Psoas muscle (tissue), 8 donors: ENCODE measurements at regions of chr1 and their contacts with region 1.

Region 1: GRCh38 chr1:192808518-192809306 is at the start of gene RGS2:
- DNase-seq: peak; percentile 90 to 93
- ATAC-seq: peak; percentile 98 to 99 (median 98)
- H3K4me3 ChIP-seq: peak within 1 kb of the TSS; percentile 78
- H3K27ac ChIP-seq: peak within 1 kb of the TSS; percentile 66
- H3K4me1 ChIP-seq: peaks cover 14% of the 10 kb centered on the region
- H3K27me3 ChIP-seq: no peaks in the 10 kb centered on the region
- CTCF ChIP-seq: no peak
- total RNA-seq, gene RGS2: 3.5 to 4.7 (median 3.8) TPM

Region 2: DNA sequence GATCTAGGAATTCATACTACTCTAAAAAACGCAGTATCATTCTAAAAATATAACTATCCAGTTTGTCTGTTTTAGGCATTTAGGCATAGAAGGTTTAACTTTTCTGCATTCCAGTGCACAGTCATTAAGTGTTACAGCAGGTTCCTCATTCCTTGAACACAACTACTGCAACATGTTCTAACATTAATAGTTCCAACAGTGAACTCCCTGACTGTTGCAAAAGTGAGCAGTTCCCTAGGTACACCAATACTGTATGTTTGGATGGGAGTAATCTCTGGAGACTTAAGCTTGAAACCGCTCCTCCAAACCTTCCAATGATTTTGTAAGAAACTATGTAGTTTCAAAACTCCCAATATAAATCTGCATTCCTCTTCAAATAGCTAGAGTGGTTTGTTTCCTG is 204.3 kb after region 1 on chr1:
- intact Hi-C with region 1: loop called (anchors 5 to 10 kb)
- DNase-seq: no peak
- ATAC-seq: peak in 2 of 4 donors; percentile 35 to 56
- H3K4me3 ChIP-seq: no peak overlapping the region
- H3K27ac ChIP-seq: no peak overlapping the region
- H3K4me1 ChIP-seq: peaks cover 6% of the 10 kb centered on the region
- H3K27me3 ChIP-seq: no peaks in the 10 kb centered on the region
- CTCF ChIP-seq: no peak

Region 3: DNA sequence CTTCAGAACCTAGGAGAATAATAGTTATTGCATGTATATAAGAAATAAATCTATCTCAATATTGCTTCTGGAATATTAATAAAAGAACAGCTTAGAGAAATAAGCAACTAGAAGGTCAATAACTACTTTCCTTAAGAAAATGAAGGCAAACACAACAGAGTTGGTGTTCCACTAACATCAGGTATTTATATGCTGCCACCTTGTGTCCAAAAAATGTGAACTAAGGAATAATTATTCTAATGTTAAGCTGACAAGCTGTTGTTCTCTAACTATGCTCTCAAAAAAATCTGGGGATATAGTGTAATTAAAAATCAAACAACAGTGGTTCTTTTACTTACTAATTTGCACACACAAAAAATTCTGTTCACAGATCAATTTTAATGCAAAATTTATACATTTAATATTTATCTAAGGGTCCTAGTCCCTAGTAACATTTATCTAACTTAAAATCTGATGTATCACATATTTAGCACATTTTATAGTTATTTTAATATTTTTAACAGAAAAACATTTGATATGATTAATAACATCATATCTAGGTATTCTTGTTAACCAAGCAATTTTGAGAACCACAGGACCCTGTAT is 210.8 kb after region 1 on chr1:
- intact Hi-C with region 1: loop called (anchors 5 to 10 kb)
- DNase-seq: no peak
- ATAC-seq: peak in 1 of 4 donors; percentile 57
- H3K4me3 ChIP-seq: no peak overlapping the region
- H3K27ac ChIP-seq: no peak overlapping the region
- H3K4me1 ChIP-seq: no peaks in the 10 kb centered on the region
- H3K27me3 ChIP-seq: no peaks in the 10 kb centered on the region
- CTCF ChIP-seq: peak; percentile 56